OCI-LY7 (cell line): ENCODE measurements at regions of chr17 and their contacts with region 1.

Region 1: GRCh38 chr17:45172454-45173286 is 11.0 kb downstream of the HEXIM2 start:
- DNase-seq: peak; percentile 81
- H3K4me3 ChIP-seq: peak overlapping the region; percentile 65
- H3K27ac ChIP-seq: peak overlapping the region; percentile 61
- H3K4me1 ChIP-seq: peaks cover 24% of the 10 kb centered on the region
- CTCF ChIP-seq: no peak

Region 2: DNA sequence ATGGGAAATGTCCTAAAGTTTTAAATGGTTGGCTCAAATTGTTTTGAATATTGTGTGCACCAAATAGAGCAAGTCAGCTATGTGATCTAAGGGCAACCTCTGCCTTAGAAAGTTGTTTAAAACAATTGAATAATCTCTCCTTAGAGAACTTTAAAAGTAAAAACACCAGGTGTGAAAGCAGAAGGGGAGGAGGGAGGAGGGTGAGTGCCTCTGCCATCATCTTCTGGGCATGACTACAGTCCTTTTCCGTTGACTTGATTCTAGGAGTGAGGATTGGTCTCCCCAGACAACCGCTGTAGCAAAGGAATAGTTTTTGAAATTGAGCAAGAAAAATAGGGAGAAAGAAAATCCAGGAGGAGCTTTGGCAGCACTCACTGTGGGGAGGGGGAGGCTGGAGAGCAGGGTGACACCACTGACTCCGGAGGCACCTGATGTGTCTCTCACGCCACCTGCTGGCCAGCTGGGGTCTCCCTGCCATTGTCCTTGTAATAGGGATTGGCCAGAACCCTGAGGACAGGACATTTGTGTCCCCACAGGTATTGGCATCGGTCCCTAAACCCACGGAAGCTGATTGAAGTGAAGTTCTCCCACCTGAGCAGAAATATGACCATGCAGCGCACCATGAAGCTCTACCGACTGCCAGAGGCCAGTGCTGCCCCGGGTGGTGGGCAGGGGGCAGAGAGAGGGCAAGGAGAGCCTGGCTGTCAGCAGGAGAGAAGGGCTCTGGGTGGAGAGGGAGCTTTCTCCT is 73.6 kb before region 1 on chr17:
- CTCF ChIA-PET with region 1: interaction called, 13 read pairs
- POLR2A ChIA-PET with region 1: no interaction called
- intact Hi-C with region 1: no loop called
- DNase-seq: peak; percentile 78
- H3K4me3 ChIP-seq: no peak overlapping the region
- H3K27ac ChIP-seq: no peak overlapping the region
- H3K4me1 ChIP-seq: no peaks in the 10 kb centered on the region
- CTCF ChIP-seq: peak; percentile 94

Region 3: GRCh38 chr17:45148183-45149036 is 24.3 kb before region 1 on chr17 and contains the start of gene HEXIM1:
- CTCF ChIA-PET with region 1: interaction called, 5 read pairs
- POLR2A ChIA-PET with region 1: interaction called, 19 read pairs
- intact Hi-C with region 1: no loop called
- DNase-seq: peak; percentile 100
- H3K4me3 ChIP-seq: peak within 1 kb of the TSS; percentile 75
- H3K27ac ChIP-seq: peak within 1 kb of the TSS; percentile 88
- H3K4me1 ChIP-seq: peaks cover 46% of the 10 kb centered on the region
- CTCF ChIP-seq: no peak
- total RNA-seq, gene HEXIM1: 12.1 and 13.9 TPM in 2 replicates

Region 4: DNA sequence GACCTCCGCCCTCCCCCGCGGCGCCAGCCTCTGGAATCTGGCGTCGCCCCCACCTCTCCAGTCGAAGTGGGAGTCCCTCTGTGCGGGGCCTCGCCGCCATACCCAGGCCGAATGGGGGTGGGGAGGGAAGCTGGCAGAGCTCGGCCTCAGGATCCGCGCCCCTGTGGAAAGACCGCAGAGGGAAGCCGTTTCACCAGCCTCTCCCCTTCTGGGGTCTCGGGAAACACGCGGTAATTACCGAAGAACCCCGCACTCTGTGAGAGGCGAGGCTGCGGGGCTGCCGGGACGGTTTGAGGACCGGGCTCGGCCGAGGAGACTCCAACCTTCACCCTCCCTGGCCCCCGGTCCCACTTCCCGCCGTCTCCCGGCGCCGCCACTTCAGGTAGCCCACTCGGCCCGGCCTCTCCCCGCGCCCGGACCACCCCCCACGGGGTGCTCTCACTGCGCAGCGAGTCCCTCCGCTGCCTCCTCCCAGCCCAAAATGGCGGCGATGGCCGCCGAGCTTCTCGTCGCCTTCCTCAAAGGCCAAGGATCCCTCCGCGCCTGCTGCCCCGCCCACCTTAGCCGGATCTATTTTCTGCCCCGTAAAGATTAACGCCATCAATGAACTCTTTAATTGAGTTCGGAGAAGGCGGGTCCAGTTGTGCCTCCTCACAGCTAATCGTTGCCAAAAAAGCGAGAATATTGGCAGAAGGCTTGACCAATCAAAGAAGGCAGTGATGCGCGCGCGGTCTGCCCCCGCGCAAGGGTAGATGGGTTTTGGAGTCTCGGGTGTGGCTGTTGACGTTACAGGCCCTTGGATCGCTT is 11.4 kb before region 1 on chr17:
- CTCF ChIA-PET with region 1: no interaction called
- POLR2A ChIA-PET with region 1: interaction called, 11 read pairs
- intact Hi-C with region 1: no loop called
- DNase-seq: peak; percentile 100
- H3K4me3 ChIP-seq: peak overlapping the region; percentile 96
- H3K27ac ChIP-seq: peak overlapping the region; percentile 70
- H3K4me1 ChIP-seq: peaks cover 22% of the 10 kb centered on the region
- CTCF ChIP-seq: no peak; the same call in none of the 2 replicates